HEK293T (cell line): ENCODE measurements at regions of chrX and their contacts with region 1.

Region 1: GRCh38 chrX:53669258-53669657 is 17.3 kb downstream of the HUWE1 start:
- DNase-seq: no peak

Region 2: GRCh38 chrX:53683556-53684414 is 14.5 kb after region 1 on chrX:
- CTCF ChIA-PET with region 1: no interaction called
- POLR2A ChIA-PET with region 1: interaction called, 17 read pairs
- DNase-seq: peak; percentile 77